ENCODE measurements at regions of chr12 and their contacts with region 1.

Region 1: GRCh38 chr12:7970475-7971252 is 34.7 kb upstream of the SLC2A3 start:
- DNase-seq: peak; percentile 68 to 91 (median 85)
- ATAC-seq: peak; percentile 93
- H3K4me3 ChIP-seq: peak overlapping the region; percentile 75
- H3K4me3 Mint-ChIP-seq: peak overlapping the region; percentile 82 to 96 (median 90)
- H3K27ac ChIP-seq: peak overlapping the region; percentile 99
- H3K27ac Mint-ChIP-seq: peak overlapping the region; percentile 92 to 99 (median 98)
- H3K4me1 ChIP-seq: peaks cover 13 to 14% of the 10 kb centered on the region in 2 donors
- H3K4me1 Mint-ChIP-seq: peaks cover 17 to 37% (median 33%) of the 10 kb centered on the region in 7 donors
- H3K27me3 ChIP-seq: no peaks in the 10 kb centered on the region
- H3K27me3 Mint-ChIP-seq: no peaks in the 10 kb centered on the region

Region 2: DNA sequence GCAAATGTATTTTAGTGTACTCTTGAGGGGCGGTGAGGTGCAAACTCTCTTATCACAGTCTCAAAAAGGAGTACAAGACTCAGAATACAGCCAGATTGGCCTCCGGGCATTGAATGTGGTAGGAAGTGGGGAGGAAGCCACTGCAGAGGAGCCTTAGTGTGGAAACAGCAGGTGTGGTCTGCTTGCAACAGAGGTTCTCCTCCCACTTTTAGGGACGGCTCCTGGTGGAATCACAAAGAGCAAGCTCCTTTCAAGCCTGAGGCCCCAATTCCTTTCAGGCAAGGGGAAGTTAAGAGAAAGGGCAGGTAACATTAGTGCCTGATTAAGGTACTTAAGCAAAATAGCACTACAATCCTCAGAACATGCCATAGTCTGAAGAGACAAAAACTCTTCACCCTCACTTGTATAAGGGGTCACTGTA is 11.0 kb before region 1 on chr12:
- CTCF ChIA-PET with region 1: interaction called, 6 read pairs
- POLR2A ChIA-PET with region 1: interaction called, 67 read pairs
- intact Hi-C with region 1: loop called (anchors 1 kb)
- DNase-seq: peak in 8 of 9 donors; percentile 34 to 49 (median 40)
- ATAC-seq: peak; percentile 33
- H3K4me3 ChIP-seq: peak overlapping the region; percentile 79
- H3K4me3 Mint-ChIP-seq: peak overlapping the region; percentile 80 to 97 (median 89)
- H3K27ac ChIP-seq: peak overlapping the region; percentile 87
- H3K27ac Mint-ChIP-seq: peak overlapping the region; percentile 87 to 99 (median 95)
- H3K4me1 ChIP-seq: peaks cover 26 to 29% of the 10 kb centered on the region in 2 donors
- H3K4me1 Mint-ChIP-seq: peaks cover 27 to 51% (median 46%) of the 10 kb centered on the region in 7 donors
- H3K27me3 ChIP-seq: no peaks in the 10 kb centered on the region
- H3K27me3 Mint-ChIP-seq: no peaks in the 10 kb centered on the region

Region 3: DNA sequence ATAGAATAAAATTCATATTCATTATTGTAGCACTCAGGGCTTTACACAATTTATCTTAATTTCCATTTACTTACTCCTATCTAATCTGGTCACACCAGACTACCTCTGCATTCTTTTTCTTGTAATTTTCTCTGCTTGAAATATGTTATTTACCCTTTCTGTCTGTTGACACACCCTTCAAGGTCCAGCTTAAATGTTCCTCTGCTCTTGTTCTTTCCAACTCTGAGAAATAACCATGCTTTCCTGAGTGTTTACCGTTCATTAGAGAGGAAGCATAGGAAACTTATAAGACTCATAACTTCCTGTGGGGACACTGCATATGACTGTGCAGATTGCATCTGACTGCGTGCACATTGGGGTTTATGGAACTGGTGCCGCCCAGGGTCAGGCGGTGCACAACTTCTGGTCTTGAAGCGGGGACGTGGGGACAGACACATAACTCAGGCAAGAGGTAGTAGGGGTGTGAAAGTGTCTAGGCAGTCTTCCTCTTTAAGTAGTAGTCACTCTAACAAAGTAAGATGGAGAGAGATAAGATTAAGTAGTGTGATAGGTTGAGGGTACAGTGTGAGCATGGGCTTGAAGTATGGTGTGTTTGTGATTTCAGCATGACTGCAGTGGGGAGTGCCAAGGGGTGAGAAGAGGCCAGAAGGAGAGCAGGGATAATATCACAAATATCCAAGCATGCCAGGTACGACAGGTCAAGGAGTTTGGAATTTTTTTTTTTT is 19.3 kb after region 1 on chr12:
- CTCF ChIA-PET with region 1: interaction called, 5 read pairs
- POLR2A ChIA-PET with region 1: interaction called, 16 read pairs
- intact Hi-C with region 1: loop called (anchors 1 kb)
- DNase-seq: peak; percentile 22 to 73 (median 27)
- ATAC-seq: peak; percentile 94
- H3K4me3 ChIP-seq: no peak overlapping the region
- H3K4me3 Mint-ChIP-seq: peak overlapping the region; percentile 61 to 85 (median 72)
- H3K27ac ChIP-seq: no peak overlapping the region
- H3K27ac Mint-ChIP-seq: peak overlapping the region; percentile 71 to 92 (median 87)
- H3K4me1 ChIP-seq: peaks cover 19 to 20% of the 10 kb centered on the region in 2 donors
- H3K4me1 Mint-ChIP-seq: peaks cover 18 to 53% (median 24%) of the 10 kb centered on the region in 7 donors
- H3K27me3 ChIP-seq: no peaks in the 10 kb centered on the region
- H3K27me3 Mint-ChIP-seq: no peaks in the 10 kb centered on the region

Region 4: GRCh38 chr12:7995266-7995963 is 24.8 kb after region 1 on chr12:
- CTCF ChIA-PET with region 1: interaction called, 4 read pairs
- POLR2A ChIA-PET with region 1: interaction called, 16 read pairs
- intact Hi-C with region 1: loop called (anchors 1 kb)
- DNase-seq: peak; percentile 39 to 89 (median 84)
- ATAC-seq: peak; percentile 100
- H3K4me3 ChIP-seq: no peak overlapping the region
- H3K4me3 Mint-ChIP-seq: no peak overlapping the region
- H3K27ac ChIP-seq: peak overlapping the region; percentile 60
- H3K27ac Mint-ChIP-seq: no peak overlapping the region
- H3K4me1 ChIP-seq: peaks cover 11 to 14% of the 10 kb centered on the region in 2 donors
- H3K4me1 Mint-ChIP-seq: peaks cover 9 to 28% (median 11%) of the 10 kb centered on the region in 7 donors
- H3K27me3 ChIP-seq: no peaks in the 10 kb centered on the region
- H3K27me3 Mint-ChIP-seq: no peaks in the 10 kb centered on the region

Region 5: GRCh38 chr12:8453021-8453513 is 482.4 kb after region 1 on chr12:
- CTCF ChIA-PET with region 1: no interaction called
- POLR2A ChIA-PET with region 1: no interaction called
- intact Hi-C with region 1: no loop called
- DNase-seq: no peak
- ATAC-seq: peak; percentile 67
- H3K4me3 ChIP-seq: no peak overlapping the region
- H3K4me3 Mint-ChIP-seq: no peak overlapping the region
- H3K27ac ChIP-seq: no peak overlapping the region
- H3K27ac Mint-ChIP-seq: no peak overlapping the region
- H3K4me1 ChIP-seq: no peaks in the 10 kb centered on the region
- H3K4me1 Mint-ChIP-seq: no peaks in the 10 kb centered on the region
- H3K27me3 ChIP-seq: no peaks in the 10 kb centered on the region
- H3K27me3 Mint-ChIP-seq: peaks cover 3 to 36% (median 15%) of the 10 kb centered on the region in 5 donors